HCT116 (cell line): ENCODE measurements at regions of chr2 and their contacts with region 1.

Region 1: GRCh38 chr2:44715671-44716081 is 225.8 kb upstream of the SIX3 start:
- DNase-seq: peak; percentile 19
- ATAC-seq: peak; percentile 85
- H3K4me3 ChIP-seq: no peak overlapping the region
- H3K27ac ChIP-seq: no peak overlapping the region
- H3K4me1 ChIP-seq: no peaks in the 10 kb centered on the region
- H3K27me3 ChIP-seq: no peaks in the 10 kb centered on the region
- CTCF ChIP-seq: peak; percentile 53 to 66 (median 64)
- POLR2A ChIP-seq: no peak
- RAD21 ChIP-seq: peak; percentile 58

Region 2: GRCh38 chr2:44560352-44560751 is 155.3 kb before region 1 on chr2:
- CTCF ChIA-PET with region 1: interaction called, 6 read pairs
- POLR2A ChIA-PET with region 1: no interaction called
- RAD21 ChIA-PET with region 1: no interaction called
- intact Hi-C with region 1: loop called (anchors 1 kb)
- DNase-seq: no peak
- ATAC-seq: peak; percentile 59; the same call in 1 of the 2 replicates
- H3K4me3 ChIP-seq: no peak overlapping the region
- H3K27ac ChIP-seq: no peak overlapping the region
- H3K4me1 ChIP-seq: no peaks in the 10 kb centered on the region
- H3K27me3 ChIP-seq: no peaks in the 10 kb centered on the region
- CTCF ChIP-seq: peak; percentile 39 to 51 (median 43); a peak in 5 of 6 replicates
- POLR2A ChIP-seq: no peak
- RAD21 ChIP-seq: peak; percentile 52